ENCODE measurements at regions of chr19 and their contacts with region 1.

Region 1: DNA sequence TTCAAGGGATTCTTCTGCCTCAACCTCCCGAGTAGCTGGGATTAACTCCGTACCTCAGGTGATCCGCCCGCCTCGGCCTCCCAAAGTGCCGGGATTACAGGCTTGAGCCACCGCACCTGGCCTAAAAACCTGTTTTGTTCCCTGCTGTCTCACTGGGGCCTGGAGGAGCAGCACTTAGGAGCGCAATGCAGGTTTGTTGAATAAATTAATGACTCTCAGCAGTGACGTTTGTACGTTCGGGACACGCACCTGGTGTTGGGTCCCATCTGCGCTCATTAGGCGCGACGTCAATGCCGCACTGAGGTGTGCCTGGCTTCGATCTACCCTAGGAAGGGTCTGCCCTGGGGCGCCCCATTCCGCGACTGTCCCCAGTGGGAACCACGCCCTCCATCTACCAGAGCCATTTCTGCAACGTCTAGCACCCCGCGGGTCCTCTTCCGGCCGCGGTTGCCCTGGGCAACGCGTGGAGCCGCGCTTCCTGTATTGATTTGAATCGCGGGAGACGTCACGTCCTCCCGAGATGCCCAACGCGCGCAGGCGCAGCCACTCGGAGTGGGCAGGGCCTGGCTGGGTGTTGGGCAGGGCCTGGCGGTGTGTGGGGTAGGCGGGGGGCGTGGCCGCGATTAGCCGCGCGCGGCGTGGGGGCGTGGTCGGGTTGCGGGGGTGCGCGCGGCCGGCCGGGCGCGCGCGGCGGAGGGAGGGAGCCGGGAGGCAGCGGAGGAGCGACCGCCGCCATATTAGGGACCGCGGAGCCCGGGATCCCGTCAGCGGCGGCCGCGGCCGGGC is at the start of gene FZR1:
- DNase-seq: peak; percentile 99
- ATAC-seq: peak; percentile 88
- H3K4me3 Mint-ChIP-seq: peak within 1 kb of the TSS; percentile 95
- H3K27ac Mint-ChIP-seq: peak within 1 kb of the TSS; percentile 99
- H3K4me1 Mint-ChIP-seq: peaks cover 50% of the 10 kb centered on the region
- H3K27me3 Mint-ChIP-seq: no peaks in the 10 kb centered on the region
- total RNA-seq, gene FZR1: 72.7 to 81.6 TPM

Region 2: DNA sequence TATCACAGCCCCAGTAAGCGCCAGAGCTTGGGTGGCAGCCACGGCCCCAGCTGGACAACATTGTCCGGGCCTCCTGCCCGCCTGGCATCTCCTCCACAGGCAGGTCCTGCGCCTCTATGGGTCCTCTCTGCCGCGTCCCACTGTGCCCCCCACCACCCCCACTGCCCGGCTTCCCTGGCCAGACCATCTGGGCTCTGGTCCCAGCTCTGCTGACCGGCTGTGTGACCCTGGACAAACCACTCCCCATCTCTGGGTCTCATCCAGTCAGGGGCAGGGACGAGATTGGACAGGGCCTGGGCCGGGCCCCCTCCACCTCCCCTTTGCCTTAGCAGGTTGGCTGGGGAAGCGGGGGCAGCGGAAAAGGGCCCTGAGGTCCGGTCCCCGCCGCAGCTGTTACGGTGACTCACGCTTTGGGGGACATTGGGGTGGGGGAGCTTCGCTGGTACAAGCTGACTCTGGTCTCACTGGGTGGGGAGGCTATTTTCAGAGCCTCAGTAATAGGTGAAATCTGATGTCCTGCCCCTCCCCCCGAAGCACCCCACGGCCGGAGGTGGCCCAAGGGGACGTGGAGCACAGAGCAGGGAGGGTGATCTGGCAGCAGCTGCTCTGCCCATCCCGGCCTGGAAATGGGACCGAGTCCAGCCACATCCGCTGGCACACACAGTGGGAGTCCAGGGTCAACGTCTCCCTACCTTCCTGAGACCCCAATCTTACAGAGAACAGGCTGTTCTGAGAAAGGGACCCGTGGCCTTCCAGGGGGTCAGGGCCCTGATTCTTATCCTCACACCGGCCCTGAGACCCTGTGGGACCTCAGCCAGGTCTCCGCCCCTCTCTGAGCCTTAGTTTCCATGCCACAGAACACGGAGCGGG is 130.3 kb before region 1 on chr19:
- CTCF ChIA-PET with region 1: no interaction called
- POLR2A ChIA-PET with region 1: no interaction called
- DNase-seq: no peak
- ATAC-seq: no peak
- H3K4me3 Mint-ChIP-seq: no peak overlapping the region
- H3K27ac Mint-ChIP-seq: no peak overlapping the region
- H3K4me1 Mint-ChIP-seq: peaks cover 9% of the 10 kb centered on the region
- H3K27me3 Mint-ChIP-seq: no peaks in the 10 kb centered on the region

Region 3: GRCh38 chr19:3479177-3479833 is 26.5 kb before region 1 on chr19:
- CTCF ChIA-PET with region 1: interaction called, 62 read pairs
- POLR2A ChIA-PET with region 1: interaction called, 5 read pairs
- DNase-seq: peak; percentile 84
- ATAC-seq: peak; percentile 64
- H3K4me3 Mint-ChIP-seq: peak overlapping the region; percentile 68
- H3K27ac Mint-ChIP-seq: peak overlapping the region; percentile 87
- H3K4me1 Mint-ChIP-seq: peaks cover 16% of the 10 kb centered on the region
- H3K27me3 Mint-ChIP-seq: no peaks in the 10 kb centered on the region

Measured in activated CD8-positive, alpha-beta T cell treated with anti-CD3 and anti-CD28 coated beads, Interleukin-2, amount 10 ng/mL, durations not matched to agents 7 days and 5 days (primary cell).